ENCODE measurements at regions of chr2 and their contacts with region 1.

Region 1: DNA sequence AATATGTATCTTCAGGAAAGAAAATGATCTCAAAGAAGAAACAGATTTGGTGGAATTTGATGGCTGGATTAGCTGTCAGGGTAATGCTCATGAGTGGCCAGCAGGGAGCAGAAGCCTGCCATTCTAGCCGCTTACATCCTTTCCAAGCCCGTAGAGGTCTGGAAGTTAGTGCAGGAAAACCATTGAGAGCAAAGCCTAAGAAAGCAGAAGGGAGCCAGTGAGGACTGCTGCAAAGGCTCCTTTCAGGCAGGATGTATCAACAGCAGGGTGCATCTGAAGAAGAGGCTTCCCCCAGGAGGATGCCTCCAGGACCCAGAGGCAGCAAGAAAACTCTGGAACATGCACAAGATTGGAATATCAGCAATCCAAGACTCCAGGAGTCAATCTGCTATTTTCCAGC is 22.9 kb upstream of the LBH start:
- DNase-seq: peak; percentile 53
- ATAC-seq: peak; percentile 75
- H3K4me3 Mint-ChIP-seq: no peak overlapping the region
- H3K27ac Mint-ChIP-seq: peak overlapping the region; percentile 49
- H3K4me1 Mint-ChIP-seq: peaks cover 18% of the 10 kb centered on the region
- H3K27me3 Mint-ChIP-seq: peaks cover 8% of the 10 kb centered on the region

Region 2: DNA sequence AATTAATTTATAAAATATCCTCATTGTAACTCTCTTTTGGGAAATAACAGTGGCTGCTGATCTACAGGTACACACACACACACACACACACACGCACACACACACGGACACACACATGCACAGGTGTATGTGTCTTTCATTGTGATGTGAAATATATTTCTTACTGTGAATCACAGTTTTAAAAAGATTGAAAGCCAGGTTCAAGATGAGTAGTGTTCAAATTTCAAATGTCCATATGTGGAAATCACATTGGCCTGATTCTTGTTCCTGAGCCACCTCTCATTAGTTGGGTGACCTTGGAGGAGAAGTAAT is 659.4 kb before region 1 on chr2:
- CTCF ChIA-PET with region 1: no interaction called
- POLR2A ChIA-PET with region 1: no interaction called
- DNase-seq: no peak
- ATAC-seq: no peak
- H3K4me3 Mint-ChIP-seq: no peak overlapping the region
- H3K27ac Mint-ChIP-seq: no peak overlapping the region
- H3K4me1 Mint-ChIP-seq: no peaks in the 10 kb centered on the region
- H3K27me3 Mint-ChIP-seq: peaks cover 28% of the 10 kb centered on the region

Region 3: DNA sequence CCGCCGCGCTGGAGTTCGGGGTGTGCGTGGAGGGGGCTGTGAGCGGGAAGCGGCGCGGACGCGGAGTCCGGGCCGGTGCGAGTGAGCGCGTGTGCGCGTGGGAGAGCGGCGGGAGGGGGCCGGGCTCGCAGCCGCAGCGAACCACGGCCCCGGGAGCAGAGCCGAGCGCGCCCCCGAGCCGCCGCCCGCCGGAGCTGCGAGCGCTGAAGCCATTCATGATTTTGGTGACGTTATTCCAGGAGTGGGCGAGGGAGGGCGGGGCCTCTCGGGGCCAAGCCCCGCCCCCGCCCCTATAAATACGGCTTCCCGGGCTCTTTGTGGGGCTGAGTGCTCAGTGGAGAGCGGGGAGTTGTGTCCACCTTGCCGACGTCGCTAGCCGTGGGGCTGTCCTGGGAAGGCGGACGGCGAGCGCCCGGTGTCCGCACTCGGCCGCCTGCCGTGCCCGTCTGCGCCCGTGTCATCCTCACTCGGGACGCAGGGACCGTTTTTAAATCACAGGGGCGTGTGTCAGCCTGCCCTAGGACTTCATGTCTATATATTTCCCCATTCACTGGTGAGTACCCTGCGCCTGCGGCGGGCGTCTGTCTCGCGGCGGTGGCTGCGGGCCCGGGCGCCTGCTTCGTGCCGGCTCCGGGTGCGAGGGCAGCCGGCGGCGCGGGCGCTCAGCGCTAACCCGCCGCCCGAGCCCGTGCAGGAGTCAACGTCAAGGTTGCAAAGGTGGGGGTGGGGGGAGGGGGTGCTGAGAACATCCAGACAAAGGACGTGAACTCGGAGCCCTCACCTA is 23.0 kb after region 1 on chr2 and contains the start of gene LBH:
- CTCF ChIA-PET with region 1: interaction called, 95 read pairs
- POLR2A ChIA-PET with region 1: interaction called, 13 read pairs
- DNase-seq: peak; percentile 89
- ATAC-seq: peak; percentile 52
- H3K4me3 Mint-ChIP-seq: peak within 1 kb of the TSS; percentile 73
- H3K27ac Mint-ChIP-seq: peak within 1 kb of the TSS; percentile 93
- H3K4me1 Mint-ChIP-seq: peaks cover 64% of the 10 kb centered on the region
- H3K27me3 Mint-ChIP-seq: peaks cover 5% of the 10 kb centered on the region
- total RNA-seq, gene LBH: 97.0 to 100 TPM

Region 4: GRCh38 chr2:30266051-30266621 is 57.7 kb after region 1 on chr2:
- CTCF ChIA-PET with region 1: interaction called, 12 read pairs
- POLR2A ChIA-PET with region 1: no interaction called
- DNase-seq: peak; percentile 76
- ATAC-seq: peak; percentile 85
- H3K4me3 Mint-ChIP-seq: peak overlapping the region; percentile 81
- H3K27ac Mint-ChIP-seq: peak overlapping the region; percentile 98
- H3K4me1 Mint-ChIP-seq: peaks cover 72% of the 10 kb centered on the region
- H3K27me3 Mint-ChIP-seq: no peaks in the 10 kb centered on the region

Region 5: GRCh38 chr2:30366199-30366691 is 157.8 kb after region 1 on chr2:
- CTCF ChIA-PET with region 1: interaction called, 10 read pairs
- POLR2A ChIA-PET with region 1: no interaction called
- DNase-seq: peak; percentile 49
- ATAC-seq: peak; percentile 78
- H3K4me3 Mint-ChIP-seq: no peak overlapping the region
- H3K27ac Mint-ChIP-seq: peak overlapping the region; percentile 63
- H3K4me1 Mint-ChIP-seq: peaks cover 42% of the 10 kb centered on the region
- H3K27me3 Mint-ChIP-seq: no peaks in the 10 kb centered on the region

Region 6: GRCh38 chr2:30475542-30475941 is 267.1 kb after region 1 on chr2:
- CTCF ChIA-PET with region 1: interaction called, 20 read pairs
- POLR2A ChIA-PET with region 1: no interaction called
- DNase-seq: no peak
- ATAC-seq: no peak
- H3K4me3 Mint-ChIP-seq: no peak overlapping the region
- H3K27ac Mint-ChIP-seq: no peak overlapping the region
- H3K4me1 Mint-ChIP-seq: no peaks in the 10 kb centered on the region
- H3K27me3 Mint-ChIP-seq: no peaks in the 10 kb centered on the region

Region 7: DNA sequence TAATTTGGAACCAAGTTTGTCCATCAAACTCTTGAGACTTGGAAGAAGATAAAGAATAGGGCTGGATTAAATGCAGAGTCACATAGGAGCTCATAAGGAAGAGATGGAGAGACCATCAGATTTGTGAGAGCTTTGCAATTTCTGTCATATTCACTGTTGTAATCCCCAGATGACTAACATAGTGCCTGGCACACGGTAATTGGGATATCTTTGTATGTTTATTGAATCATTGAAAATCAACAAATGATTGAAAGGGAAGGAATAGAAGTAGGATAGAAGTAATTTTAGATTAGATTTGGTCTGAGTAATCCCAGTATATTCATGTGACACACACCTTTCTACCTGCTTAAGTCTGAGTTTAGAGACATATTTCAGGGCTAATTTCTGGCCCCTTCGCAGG is 314.0 kb after region 1 on chr2:
- CTCF ChIA-PET with region 1: no interaction called
- POLR2A ChIA-PET with region 1: no interaction called
- DNase-seq: no peak
- ATAC-seq: no peak
- H3K4me3 Mint-ChIP-seq: no peak overlapping the region
- H3K27ac Mint-ChIP-seq: no peak overlapping the region
- H3K4me1 Mint-ChIP-seq: no peaks in the 10 kb centered on the region
- H3K27me3 Mint-ChIP-seq: no peaks in the 10 kb centered on the region